CD4-positive, alpha-beta memory T cell (primary cell): ENCODE measurements at regions of chr3 and their contacts with region 1.

Region 1: DNA sequence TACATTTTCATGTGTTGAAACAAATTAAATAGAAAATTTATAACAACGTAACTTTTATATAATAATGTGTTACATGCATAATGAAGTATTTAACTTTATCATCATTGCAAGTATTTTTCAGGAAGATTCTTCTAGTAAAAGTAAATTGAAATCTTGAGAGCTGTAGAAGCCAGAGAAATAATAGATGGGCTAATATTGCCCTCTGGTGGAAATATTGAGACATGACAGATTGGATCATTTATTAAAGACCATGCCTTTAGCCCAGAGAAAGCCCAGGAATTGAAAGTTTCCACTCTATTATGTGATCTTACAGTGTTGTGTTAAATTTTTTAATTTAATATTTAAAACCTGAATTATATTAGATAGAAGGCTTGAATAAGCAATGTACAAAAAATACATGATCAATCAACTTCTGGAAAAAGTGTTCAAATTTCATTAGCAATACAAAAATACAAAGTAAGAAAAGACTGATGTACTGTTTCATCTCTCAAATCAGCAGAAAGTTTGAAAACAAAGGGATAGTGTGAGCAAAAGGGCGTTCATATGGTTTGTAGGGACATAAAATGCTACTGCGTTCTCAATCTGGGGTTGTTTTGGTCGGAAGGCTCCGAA is 52.7 kb upstream of the SPTSSB start:
- DNase-seq: peak in 4 of 5 donors; percentile 45 to 50 (median 48)
- H3K4me3 ChIP-seq: no peak overlapping the region
- H3K4me3 Mint-ChIP-seq: no peak overlapping the region
- H3K27ac ChIP-seq: no peak overlapping the region
- H3K27ac Mint-ChIP-seq: no peak overlapping the region
- H3K4me1 ChIP-seq: peaks cover 8% of the 10 kb centered on the region
- H3K4me1 Mint-ChIP-seq: peaks cover 6 to 11% (median 9%) of the 10 kb centered on the region in 4 donors
- H3K27me3 ChIP-seq: no peaks in the 10 kb centered on the region
- H3K27me3 Mint-ChIP-seq: no peaks in the 10 kb centered on the region

Region 2: DNA sequence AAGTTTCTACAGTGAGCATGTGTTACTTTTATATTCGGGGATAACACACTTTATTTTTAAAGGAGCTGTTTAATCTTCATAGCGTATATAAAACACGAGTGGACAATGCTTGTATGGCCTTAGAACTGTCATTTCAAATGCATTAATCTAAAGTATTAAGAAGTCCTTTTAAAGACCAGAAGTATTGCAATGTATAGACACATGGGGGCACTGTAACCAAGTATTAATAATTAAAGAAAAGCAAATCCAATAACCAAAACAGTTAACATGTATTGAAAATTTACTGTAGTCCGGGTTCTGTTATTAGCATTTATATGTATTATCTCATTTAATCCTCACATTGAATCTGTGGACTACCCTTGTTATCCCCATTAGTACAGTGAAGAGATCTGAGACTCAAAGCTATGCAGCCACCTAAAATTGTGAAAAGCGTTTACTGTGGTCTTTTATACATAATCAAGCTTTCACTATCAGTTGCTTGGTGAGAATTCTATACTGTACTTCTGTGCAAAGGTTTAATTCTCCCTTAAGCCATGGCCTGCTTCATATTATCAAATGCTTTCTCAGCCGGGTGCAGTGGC is 737.0 kb before region 1 on chr3:
- CTCF ChIA-PET with region 1: interaction called, 6 read pairs
- POLR2A ChIA-PET with region 1: no interaction called
- intact Hi-C with region 1: loop called (anchors 5 kb)
- DNase-seq: peak in 3 of 5 donors; percentile 6 to 11 (median 7)
- H3K4me3 ChIP-seq: no peak overlapping the region
- H3K4me3 Mint-ChIP-seq: no peak overlapping the region
- H3K27ac ChIP-seq: no peak overlapping the region
- H3K27ac Mint-ChIP-seq: no peak overlapping the region
- H3K4me1 ChIP-seq: no peaks in the 10 kb centered on the region
- H3K4me1 Mint-ChIP-seq: no peaks in the 10 kb centered on the region
- H3K27me3 ChIP-seq: no peaks in the 10 kb centered on the region
- H3K27me3 Mint-ChIP-seq: peaks cover 2 to 6% of the 10 kb centered on the region in 2 donors

Region 3: GRCh38 chr3:160707187-160707794 is 716.7 kb before region 1 on chr3:
- CTCF ChIA-PET with region 1: interaction called, 4 read pairs
- POLR2A ChIA-PET with region 1: no interaction called
- intact Hi-C with region 1: loop called (anchors 1 kb)
- DNase-seq: peak in 4 of 5 donors; percentile 36 to 44 (median 40)
- H3K4me3 ChIP-seq: no peak overlapping the region
- H3K4me3 Mint-ChIP-seq: no peak overlapping the region
- H3K27ac ChIP-seq: no peak overlapping the region
- H3K27ac Mint-ChIP-seq: no peak overlapping the region
- H3K4me1 ChIP-seq: no peaks in the 10 kb centered on the region
- H3K4me1 Mint-ChIP-seq: no peaks in the 10 kb centered on the region
- H3K27me3 ChIP-seq: no peaks in the 10 kb centered on the region
- H3K27me3 Mint-ChIP-seq: peaks cover 24 to 36% of the 10 kb centered on the region in 2 donors

Region 4: GRCh38 chr3:160941885-160942494 is 482.0 kb before region 1 on chr3:
- CTCF ChIA-PET with region 1: no interaction called
- POLR2A ChIA-PET with region 1: no interaction called
- intact Hi-C with region 1: loop called (anchors 1 kb)
- DNase-seq: peak; percentile 52 to 65 (median 58)
- H3K4me3 ChIP-seq: no peak overlapping the region
- H3K4me3 Mint-ChIP-seq: no peak overlapping the region
- H3K27ac ChIP-seq: no peak overlapping the region
- H3K27ac Mint-ChIP-seq: no peak overlapping the region
- H3K4me1 ChIP-seq: no peaks in the 10 kb centered on the region
- H3K4me1 Mint-ChIP-seq: peaks cover 0 to 4% (median 3%) of the 10 kb centered on the region in 4 donors
- H3K27me3 ChIP-seq: no peaks in the 10 kb centered on the region
- H3K27me3 Mint-ChIP-seq: no peaks in the 10 kb centered on the region

Region 5: GRCh38 chr3:161096771-161097355 is 327.2 kb before region 1 on chr3:
- CTCF ChIA-PET with region 1: interaction called, 6 read pairs
- POLR2A ChIA-PET with region 1: no interaction called
- intact Hi-C with region 1: loop called (anchors 1 kb)
- DNase-seq: peak in 4 of 5 donors; percentile 6 to 13 (median 7)
- H3K4me3 ChIP-seq: no peak overlapping the region
- H3K4me3 Mint-ChIP-seq: no peak overlapping the region
- H3K27ac ChIP-seq: no peak overlapping the region
- H3K27ac Mint-ChIP-seq: no peak overlapping the region
- H3K4me1 ChIP-seq: no peaks in the 10 kb centered on the region
- H3K4me1 Mint-ChIP-seq: no peaks in the 10 kb centered on the region
- H3K27me3 ChIP-seq: no peaks in the 10 kb centered on the region
- H3K27me3 Mint-ChIP-seq: peaks cover 0 to 4% of the 10 kb centered on the region in 2 donors